Caki2 (cell line): ENCODE measurements at regions of chr18 and their contacts with region 1.

Region 1: DNA sequence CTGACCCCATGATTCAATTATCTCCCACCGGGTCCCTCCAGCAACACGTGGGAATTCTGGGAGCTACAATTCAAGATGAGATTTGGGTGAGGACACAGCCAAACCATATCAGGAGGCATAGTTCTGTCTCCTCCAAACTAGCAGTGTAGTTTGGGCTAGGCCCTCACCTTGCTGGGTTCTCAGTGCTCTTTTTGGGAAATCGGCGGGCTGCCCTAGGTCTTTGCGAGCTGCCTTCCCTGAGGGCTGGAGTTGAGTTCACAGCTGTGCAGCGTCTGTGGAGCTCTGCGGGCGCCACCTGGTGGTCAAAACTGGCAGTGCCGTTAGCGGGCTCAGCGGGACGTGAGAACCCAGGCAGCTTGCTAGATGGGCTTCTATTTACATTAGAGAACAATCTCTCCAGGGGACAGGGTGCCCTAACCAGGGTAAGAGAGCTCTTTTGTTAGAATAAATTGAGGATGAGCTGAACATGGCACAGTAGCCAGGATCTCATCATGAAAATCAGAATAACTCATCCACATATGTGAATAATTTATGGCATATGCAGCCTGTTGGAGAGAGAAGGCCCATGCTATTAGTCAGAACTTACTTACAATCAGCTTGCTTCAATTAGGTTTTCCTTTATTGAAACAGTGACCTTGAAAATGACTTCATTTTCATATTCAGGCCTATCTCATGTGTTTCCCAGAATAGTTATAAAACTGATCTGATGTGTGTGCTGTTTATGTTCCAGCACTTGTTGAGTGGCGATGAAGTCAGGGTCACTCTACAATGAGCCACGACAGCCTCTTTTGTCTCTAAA is 27.4 kb upstream of the YES1 start:
- DNase-seq: peak; percentile 57

Region 2: DNA sequence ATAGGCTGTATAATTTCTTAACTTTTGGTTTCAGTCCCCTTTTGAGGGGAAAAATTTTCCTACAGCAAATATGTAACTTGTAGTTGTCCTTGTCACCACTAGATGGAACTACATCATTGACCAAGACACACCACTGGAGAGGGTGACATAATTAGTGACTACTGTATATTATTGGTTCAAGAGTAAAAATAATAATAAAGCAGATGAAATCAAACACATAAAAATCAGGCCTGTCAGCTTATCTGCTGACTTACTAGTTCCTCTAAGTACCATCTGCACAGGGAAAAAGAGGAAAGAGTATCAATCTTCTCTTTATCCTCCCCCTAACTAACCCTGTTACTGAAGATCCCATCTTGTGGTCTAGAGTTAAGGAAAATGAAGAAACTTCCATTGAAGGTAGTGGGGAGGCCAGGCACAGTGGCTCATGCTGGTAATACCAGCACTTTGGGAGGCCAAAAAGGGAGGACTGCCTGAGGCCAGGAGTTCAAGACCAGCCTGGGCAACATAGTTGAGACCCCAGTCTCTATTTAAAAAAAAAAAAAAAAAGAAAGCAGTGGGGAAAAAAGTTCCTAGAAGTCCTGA is 97.4 kb before region 1 on chr18:
- in situ Hi-C with region 1: loop called (anchors 25 kb)
- DNase-seq: peak; percentile 21

Region 3: GRCh38 chr18:939167-939566 is 99.7 kb after region 1 on chr18:
- in situ Hi-C with region 1: no loop called
- DNase-seq: no peak

Region 4: GRCh38 chr18:1048032-1048431 is 208.6 kb after region 1 on chr18:
- in situ Hi-C with region 1: no loop called
- DNase-seq: no peak

Region 5: GRCh38 chr18:1253827-1254226 is 414.4 kb after region 1 on chr18:
- in situ Hi-C with region 1: no loop called
- DNase-seq: no peak